ENCODE measurements at regions of chr1 and their contacts with region 1.

Region 1: GRCh38 chr1:21823206-21823979 is 11.3 kb downstream of the LDLRAD2 start:
- DNase-seq: no peak
- ATAC-seq: no peak
- H3K4me3 ChIP-seq: no peak overlapping the region
- H3K4me3 Mint-ChIP-seq: no peak overlapping the region
- H3K27ac ChIP-seq: no peak overlapping the region
- H3K27ac Mint-ChIP-seq: no peak overlapping the region
- H3K4me1 ChIP-seq: no peaks in the 10 kb centered on the region
- H3K4me1 Mint-ChIP-seq: peaks cover 0 to 3% (median 2%) of the 10 kb centered on the region in 3 donors
- H3K27me3 ChIP-seq: peaks cover 0 to 13% of the 10 kb centered on the region in 2 experiments
- H3K27me3 Mint-ChIP-seq: peaks cover 0 to 4% of the 10 kb centered on the region in 2 donors

Region 2: DNA sequence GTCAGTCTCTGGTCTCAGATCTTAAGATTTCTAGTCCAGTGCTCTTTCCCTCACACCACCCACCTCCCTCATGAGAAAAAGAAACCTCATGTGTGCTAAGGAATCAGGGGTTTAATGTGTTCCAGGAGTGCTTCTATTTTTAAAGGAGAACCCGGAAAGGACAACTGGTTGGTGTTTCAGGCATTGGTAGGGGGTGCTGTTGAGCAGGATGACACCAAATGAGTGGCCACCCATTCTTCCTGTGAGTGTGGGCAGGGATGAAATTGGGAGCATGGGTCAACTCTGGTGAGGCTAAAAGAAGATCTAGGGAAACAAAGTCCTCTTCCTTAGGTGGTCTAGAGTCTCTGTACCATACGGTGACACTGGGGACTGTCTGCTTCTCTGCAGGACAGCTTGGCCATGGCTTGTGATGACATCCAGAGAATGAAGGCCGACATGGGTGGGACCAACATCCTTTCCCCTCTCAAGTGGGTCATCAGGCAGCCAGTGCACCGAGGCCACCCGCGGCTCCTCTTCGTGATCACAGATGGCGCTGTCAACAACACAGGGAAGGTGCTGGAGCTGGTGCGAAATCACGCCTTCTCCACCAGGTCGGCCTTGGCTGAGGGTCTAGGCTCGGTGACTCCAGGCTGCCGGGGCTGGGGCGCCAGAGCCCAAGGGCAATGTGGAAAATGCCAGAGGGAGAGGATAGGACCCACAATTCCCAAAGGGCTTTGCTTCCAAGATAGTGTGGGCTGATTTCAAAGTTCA is 1493.4 kb before region 1 on chr1:
- CTCF ChIA-PET with region 1: no interaction called
- POLR2A ChIA-PET with region 1: interaction called in 1 of 2 experiments, 14 read pairs
- DNase-seq: no peak
- ATAC-seq: no peak
- H3K4me3 ChIP-seq: no peak overlapping the region
- H3K4me3 Mint-ChIP-seq: no peak overlapping the region
- H3K27ac ChIP-seq: no peak overlapping the region
- H3K27ac Mint-ChIP-seq: no peak overlapping the region
- H3K4me1 ChIP-seq: no peaks in the 10 kb centered on the region
- H3K4me1 Mint-ChIP-seq: no peaks in the 10 kb centered on the region
- H3K27me3 ChIP-seq: peaks cover 0 to 24% of the 10 kb centered on the region in 2 experiments
- H3K27me3 Mint-ChIP-seq: peaks cover 15 to 24% of the 10 kb centered on the region in 2 donors

Measured in T-cell (primary cell).